ENCODE measurements at regions of chr17 and their contacts with region 1.

Region 1: DNA sequence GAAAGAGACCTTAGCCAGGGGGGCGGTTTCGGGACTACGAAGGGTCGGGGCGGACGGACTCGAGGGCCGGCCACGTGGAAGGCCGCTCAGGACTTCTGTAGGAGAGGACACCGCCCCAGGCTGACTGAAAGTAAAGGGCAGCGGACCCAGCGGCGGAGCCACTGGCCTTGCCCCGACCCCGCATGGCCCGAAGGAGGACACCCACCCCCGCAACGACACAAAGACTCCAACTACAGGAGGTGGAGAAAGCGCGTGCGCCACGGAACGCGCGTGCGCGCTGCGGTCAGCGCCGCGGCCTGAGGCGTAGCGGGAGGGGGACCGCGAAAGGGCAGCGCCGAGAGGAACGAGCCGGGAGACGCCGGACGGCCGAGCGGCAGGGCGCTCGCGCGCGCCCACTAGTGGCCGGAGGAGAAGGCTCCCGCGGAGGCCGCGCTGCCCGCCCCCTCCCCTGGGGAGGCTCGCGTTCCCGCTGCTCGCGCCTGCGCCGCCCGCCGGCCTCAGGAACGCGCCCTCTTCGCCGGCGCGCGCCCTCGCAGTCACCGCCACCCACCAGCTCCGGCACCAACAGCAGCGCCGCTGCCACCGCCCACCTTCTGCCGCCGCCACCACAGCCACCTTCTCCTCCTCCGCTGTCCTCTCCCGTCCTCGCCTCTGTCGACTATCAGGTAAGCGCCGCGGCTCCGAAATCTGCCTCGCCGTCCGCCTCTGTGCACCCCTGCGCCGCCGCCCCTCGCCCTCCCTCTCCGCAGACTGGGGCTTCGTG is at the start of gene MAPT:
- DNase-seq: peak; percentile 90
- ATAC-seq: peak; percentile 91
- H3K4me3 Mint-ChIP-seq: peak within 1 kb of the TSS; percentile 75
- H3K27ac Mint-ChIP-seq: no peak within 1 kb of the TSS
- H3K4me1 Mint-ChIP-seq: peaks cover 19% of the 10 kb centered on the region
- H3K27me3 Mint-ChIP-seq: peaks cover 36% of the 10 kb centered on the region
- total RNA-seq, gene MAPT: 0.75 to 1.7 TPM

Region 2: GRCh38 chr17:45976755-45977505 is 82.7 kb after region 1 on chr17:
- CTCF ChIA-PET with region 1: no interaction called
- POLR2A ChIA-PET with region 1: no interaction called
- intact Hi-C with region 1: no loop called
- DNase-seq: no peak
- ATAC-seq: no peak
- H3K4me3 Mint-ChIP-seq: no peak overlapping the region
- H3K27ac Mint-ChIP-seq: no peak overlapping the region
- H3K4me1 Mint-ChIP-seq: no peaks in the 10 kb centered on the region
- H3K27me3 Mint-ChIP-seq: no peaks in the 10 kb centered on the region

Region 3: DNA sequence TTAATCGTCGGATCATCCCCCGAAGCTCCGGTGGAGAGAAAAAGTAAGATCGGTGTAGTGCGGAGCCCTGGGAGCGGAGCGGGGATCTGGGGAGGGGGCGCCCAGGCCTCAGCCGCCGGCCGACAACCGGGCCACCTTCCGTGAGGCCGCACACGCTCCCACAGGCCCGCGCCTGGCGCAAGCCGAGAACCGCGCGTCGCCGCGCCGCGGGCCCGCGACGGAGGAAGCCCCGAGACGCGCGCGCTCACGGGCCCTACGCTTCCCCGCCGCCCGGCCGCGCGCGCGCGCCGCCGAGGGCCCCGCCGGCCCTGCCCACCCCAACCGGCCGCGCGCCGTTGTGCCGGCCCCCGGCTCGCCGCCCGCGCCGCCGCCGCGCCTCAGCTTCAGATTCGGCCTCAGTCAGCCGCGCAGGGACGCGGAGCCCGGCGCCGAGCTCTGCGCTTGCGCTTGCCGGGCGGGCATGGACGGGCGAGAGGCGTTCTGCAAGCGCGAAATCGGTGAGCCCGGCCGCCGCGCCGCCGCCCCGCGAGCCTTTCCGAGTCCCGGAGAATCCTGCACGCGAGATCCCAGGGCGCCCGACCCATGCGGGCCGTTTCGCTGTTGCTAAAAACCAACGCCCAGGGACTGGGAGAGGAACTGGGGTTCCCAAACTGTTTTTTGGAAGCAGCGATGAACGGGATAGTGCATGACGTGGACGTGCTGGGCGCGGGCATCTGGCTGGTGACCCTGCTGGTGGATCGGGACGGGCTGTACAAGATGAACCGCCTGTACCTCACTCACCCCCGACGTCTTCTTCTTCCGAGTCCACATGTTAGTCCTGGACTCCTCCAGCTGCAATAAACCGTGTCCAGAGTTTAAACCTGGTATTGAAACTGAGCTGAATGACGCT is 372.7 kb after region 1 on chr17:
- CTCF ChIA-PET with region 1: no interaction called
- POLR2A ChIA-PET with region 1: no interaction called
- intact Hi-C with region 1: loop called in 1 of 2 experiments (anchors 1 kb)
- DNase-seq: peak; percentile 90
- ATAC-seq: peak; percentile 85
- H3K4me3 Mint-ChIP-seq: peak overlapping the region; percentile 76
- H3K27ac Mint-ChIP-seq: peak overlapping the region; percentile 74
- H3K4me1 Mint-ChIP-seq: peaks cover 34% of the 10 kb centered on the region
- H3K27me3 Mint-ChIP-seq: no peaks in the 10 kb centered on the region

Measured in activated CD4-positive, alpha-beta T cell treated with anti-CD3 and anti-CD28 coated beads for 36 hours (primary cell).